ENCODE measurements at regions of chr15 and their contacts with region 1.

Region 1: GRCh38 chr15:40893733-40894688 is at the start of gene VPS18:
- DNase-seq: peak; percentile 98
- H3K4me3 Mint-ChIP-seq: peak within 1 kb of the TSS; percentile 97
- H3K27ac Mint-ChIP-seq: peak within 1 kb of the TSS; percentile 92
- H3K4me1 Mint-ChIP-seq: peaks cover 38% of the 10 kb centered on the region
- H3K27me3 Mint-ChIP-seq: peaks cover 4% of the 10 kb centered on the region
- total RNA-seq, gene VPS18: 15.0 and 16.7 TPM in 2 replicates

Region 2: GRCh38 chr15:40684381-40684780 is 209.6 kb before region 1 on chr15:
- intact Hi-C with region 1: loop called (anchors 1 kb)
- DNase-seq: no peak
- H3K4me3 Mint-ChIP-seq: no peak overlapping the region
- H3K27ac Mint-ChIP-seq: no peak overlapping the region
- H3K4me1 Mint-ChIP-seq: no peaks in the 10 kb centered on the region
- H3K27me3 Mint-ChIP-seq: no peaks in the 10 kb centered on the region

Region 3: GRCh38 chr15:40754883-40755811 is 138.9 kb before region 1 on chr15 and contains the start of gene RMDN3:
- intact Hi-C with region 1: loop called (anchors 2 kb)
- DNase-seq: peak; percentile 94
- H3K4me3 Mint-ChIP-seq: peak within 1 kb of the TSS; percentile 91
- H3K27ac Mint-ChIP-seq: peak within 1 kb of the TSS; percentile 97
- H3K4me1 Mint-ChIP-seq: peaks cover 38% of the 10 kb centered on the region
- H3K27me3 Mint-ChIP-seq: no peaks in the 10 kb centered on the region
- total RNA-seq, gene RMDN3: 39.0 and 42.2 TPM in 2 replicates

Region 4: GRCh38 chr15:40857601-40858341 is 36.2 kb before region 1 on chr15:
- intact Hi-C with region 1: loop called (anchors 1 kb)
- DNase-seq: peak; percentile 77
- H3K4me3 Mint-ChIP-seq: no peak overlapping the region
- H3K27ac Mint-ChIP-seq: no peak overlapping the region
- H3K4me1 Mint-ChIP-seq: peaks cover 18% of the 10 kb centered on the region
- H3K27me3 Mint-ChIP-seq: no peaks in the 10 kb centered on the region

Region 5: DNA sequence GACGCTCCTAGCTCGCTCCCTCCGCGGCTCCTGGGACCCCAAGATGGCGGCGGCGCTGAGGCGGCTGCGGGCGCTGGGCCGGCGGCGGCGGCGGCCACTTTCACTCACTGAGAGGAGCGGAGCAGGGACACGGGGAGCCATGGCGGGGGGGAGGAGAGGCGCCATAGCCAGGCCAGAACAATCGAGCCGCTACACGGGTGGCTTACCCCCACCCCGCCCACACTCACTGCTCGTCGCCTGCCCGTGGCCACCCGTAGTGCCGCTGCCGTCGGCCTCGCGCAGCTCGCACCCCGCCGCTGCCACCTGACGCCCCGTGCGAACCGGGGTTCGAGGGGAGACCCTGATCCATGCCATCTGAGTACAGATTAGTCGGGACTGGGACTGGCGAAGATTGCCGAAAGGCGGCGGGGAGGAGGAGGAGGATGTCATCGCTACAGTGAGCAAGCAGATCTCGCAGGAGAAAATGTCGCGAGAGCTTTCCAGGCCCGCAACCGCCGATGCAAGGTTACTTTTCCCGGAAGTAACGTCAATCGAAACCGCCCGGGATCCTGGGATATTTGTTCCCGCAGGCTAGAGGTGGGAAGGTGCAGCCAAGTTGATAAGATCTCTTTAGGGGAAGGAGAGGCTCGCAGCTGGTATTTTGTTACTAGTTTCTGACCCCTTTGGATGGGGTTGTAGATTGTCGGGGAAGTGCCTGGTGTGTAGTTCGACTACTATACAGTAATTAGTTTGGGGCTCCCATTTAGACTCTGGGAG is 222.3 kb after region 1 on chr15 and contains the start of gene INO80:
- intact Hi-C with region 1: loop called (anchors 1 kb)
- DNase-seq: peak; percentile 95
- H3K4me3 Mint-ChIP-seq: peak within 1 kb of the TSS; percentile 92
- H3K27ac Mint-ChIP-seq: peak within 1 kb of the TSS; percentile 99
- H3K4me1 Mint-ChIP-seq: peaks cover 20% of the 10 kb centered on the region
- H3K27me3 Mint-ChIP-seq: peaks cover 6% of the 10 kb centered on the region
- total RNA-seq, gene INO80: 39.2 and 39.6 TPM in 2 replicates

Region 6: GRCh38 chr15:41730543-41730942 is 836.5 kb after region 1 on chr15:
- intact Hi-C with region 1: no loop called
- DNase-seq: no peak
- H3K4me3 Mint-ChIP-seq: no peak overlapping the region
- H3K27ac Mint-ChIP-seq: no peak overlapping the region
- H3K4me1 Mint-ChIP-seq: no peaks in the 10 kb centered on the region
- H3K27me3 Mint-ChIP-seq: no peaks in the 10 kb centered on the region

Measured in activated T-helper 1 cell treated with anti-CD3 and anti-CD28 coated beads, Interleukin-12 subunit alpha, Interleukin-12 subunit beta, Interleukin-2, Interleukin-4 antibody, amounts not matched to agents 30 ng/mL and 10 ng/mL and 1 ng/mL, durations not matched to agents 14 hours and 24 hours and 36 hours (primary cell).